Activated B cell treated with CpG ODN at 0.5 μM for 24 hours (primary cell): ENCODE measurements at regions of chr12 and their contacts with region 1.

Region 1: GRCh38 chr12:132761032-132761920 is at the start of gene ANKLE2:
- DNase-seq: peak; percentile 53
- ATAC-seq: peak; percentile 56
- H3K4me3 Mint-ChIP-seq: peak within 1 kb of the TSS; percentile 98
- H3K27ac Mint-ChIP-seq: peak within 1 kb of the TSS; percentile 96
- H3K4me1 Mint-ChIP-seq: peaks cover 60% of the 10 kb centered on the region
- H3K27me3 Mint-ChIP-seq: no peaks in the 10 kb centered on the region
- CTCF ChIP-seq: no peak
- total RNA-seq, gene ANKLE2: 117 and 136 TPM in 2 replicates

Region 2: DNA sequence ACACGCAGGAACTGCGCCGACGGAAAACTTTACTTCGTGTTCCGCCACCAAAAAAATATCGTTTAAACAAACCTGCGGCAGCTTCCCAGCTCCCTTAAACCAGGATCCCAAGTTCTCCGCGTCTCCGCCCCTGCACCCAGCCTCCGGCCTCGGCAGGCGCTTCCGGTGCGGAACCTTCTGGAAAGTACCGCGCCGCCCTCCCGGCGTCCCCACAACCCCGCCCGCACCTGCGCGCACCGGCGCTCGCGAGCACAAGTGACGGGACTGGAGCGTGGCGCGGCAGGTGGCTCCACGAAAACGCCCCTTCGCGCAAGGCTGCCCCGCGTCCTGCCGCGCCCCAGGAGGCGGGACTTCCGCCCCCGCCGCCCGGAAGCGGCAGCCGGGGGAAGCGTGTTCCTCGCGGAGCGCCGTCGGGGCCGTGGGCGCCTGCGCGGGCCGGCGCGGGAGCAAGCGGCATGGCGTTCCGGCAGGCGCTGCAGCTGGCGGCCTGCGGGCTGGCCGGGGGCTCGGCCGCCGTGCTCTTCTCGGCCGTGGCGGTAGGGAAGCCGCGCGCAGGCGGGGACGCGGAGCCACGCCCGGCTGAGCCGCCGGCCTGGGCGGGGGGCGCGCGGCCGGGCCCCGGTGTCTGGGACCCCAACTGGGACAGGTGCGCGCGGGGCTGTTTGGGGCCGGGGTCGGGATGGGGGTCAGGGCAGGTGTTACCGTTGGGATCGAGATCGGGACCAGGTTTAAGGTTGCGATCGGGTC is 50.7 kb before region 1 on chr12 and contains the start of gene PGAM5:
- CTCF ChIA-PET with region 1: no interaction called
- POLR2A ChIA-PET with region 1: interaction called, 5 read pairs
- intact Hi-C with region 1: loop called (anchors 1 kb)
- DNase-seq: peak; percentile 96
- ATAC-seq: peak; percentile 93
- H3K4me3 Mint-ChIP-seq: peak within 1 kb of the TSS; percentile 92
- H3K27ac Mint-ChIP-seq: peak within 1 kb of the TSS; percentile 95
- H3K4me1 Mint-ChIP-seq: peaks cover 33% of the 10 kb centered on the region
- H3K27me3 Mint-ChIP-seq: no peaks in the 10 kb centered on the region
- CTCF ChIP-seq: no peak
- total RNA-seq, gene PGAM5: 44.0 and 48.7 TPM in 2 replicates

Region 3: DNA sequence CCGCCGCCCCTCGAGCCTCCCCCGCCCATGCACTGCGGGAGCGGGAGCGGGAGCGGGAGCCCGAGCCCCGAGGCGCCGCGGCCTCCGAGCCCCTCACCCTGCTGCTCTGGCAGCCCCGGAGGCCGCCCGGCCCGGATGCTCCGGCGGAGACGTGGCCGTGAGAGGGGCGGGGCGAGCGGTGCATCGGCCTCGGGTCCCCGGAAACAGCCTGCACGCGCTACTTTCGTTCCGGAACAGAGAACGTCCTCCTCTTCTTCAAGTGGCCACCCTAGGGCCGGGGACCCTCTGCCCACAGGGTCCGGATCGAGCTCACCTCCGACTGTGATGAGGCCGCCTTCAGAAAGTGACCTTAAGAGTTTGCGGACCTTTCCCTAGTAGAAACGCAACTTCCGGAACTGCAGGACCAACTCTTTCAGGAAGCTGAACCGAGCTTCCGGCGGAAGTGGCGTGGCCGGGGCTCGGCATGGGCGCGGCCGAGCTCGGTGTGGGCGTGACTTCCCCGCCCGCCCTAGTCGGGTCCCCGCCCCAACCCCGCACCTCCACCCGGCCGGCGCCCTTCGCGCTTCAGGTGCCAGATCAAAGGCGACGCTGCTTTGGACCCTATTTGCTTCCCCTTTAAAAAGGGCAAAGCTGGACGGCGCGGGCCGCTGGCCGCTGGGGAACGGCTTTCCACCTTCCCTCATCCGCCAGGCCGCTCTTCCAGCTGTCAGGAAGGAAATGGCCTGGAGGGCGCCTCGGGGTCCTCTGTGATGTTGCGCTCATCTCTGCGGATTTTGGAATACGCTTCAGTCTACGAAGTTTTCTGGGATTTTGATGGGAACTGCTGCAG is 67.6 kb after region 1 on chr12 and contains the start of gene GOLGA3:
- CTCF ChIA-PET with region 1: no interaction called
- POLR2A ChIA-PET with region 1: interaction called, 13 read pairs
- intact Hi-C with region 1: loop called (anchors 5 kb)
- DNase-seq: peak; percentile 95
- ATAC-seq: peak; percentile 92
- H3K4me3 Mint-ChIP-seq: peak within 1 kb of the TSS; percentile 96
- H3K27ac Mint-ChIP-seq: peak within 1 kb of the TSS; percentile 100
- H3K4me1 Mint-ChIP-seq: peaks cover 50% of the 10 kb centered on the region
- H3K27me3 Mint-ChIP-seq: no peaks in the 10 kb centered on the region
- CTCF ChIP-seq: no peak
- total RNA-seq, gene GOLGA3: 51.3 and 52.4 TPM in 2 replicates

Region 4: GRCh38 chr12:132908145-132909044 is 147.1 kb after region 1 on chr12:
- CTCF ChIA-PET with region 1: no interaction called
- POLR2A ChIA-PET with region 1: interaction called, 5 read pairs
- intact Hi-C with region 1: loop called (anchors 2 kb)
- DNase-seq: peak; percentile 91
- ATAC-seq: peak; percentile 90
- H3K4me3 Mint-ChIP-seq: peak overlapping the region; percentile 94
- H3K27ac Mint-ChIP-seq: peak overlapping the region; percentile 96
- H3K4me1 Mint-ChIP-seq: peaks cover 13% of the 10 kb centered on the region
- H3K27me3 Mint-ChIP-seq: peaks cover 2% of the 10 kb centered on the region
- CTCF ChIP-seq: no peak

Region 5: GRCh38 chr12:133130038-133130807 is 368.9 kb after region 1 on chr12 and contains the starts of genes ZNF10 and ZNF891:
- CTCF ChIA-PET with region 1: no interaction called
- POLR2A ChIA-PET with region 1: interaction called, 3 read pairs
- intact Hi-C with region 1: loop called (anchors 5 kb)
- DNase-seq: peak; percentile 99
- ATAC-seq: peak; percentile 86
- H3K4me3 Mint-ChIP-seq: peak within 1 kb of the TSS; percentile 95
- H3K27ac Mint-ChIP-seq: peak within 1 kb of the TSS; percentile 98
- H3K4me1 Mint-ChIP-seq: peaks cover 21% of the 10 kb centered on the region
- H3K27me3 Mint-ChIP-seq: no peaks in the 10 kb centered on the region
- CTCF ChIP-seq: no peak
- total RNA-seq, gene ZNF10: 8.4 and 10.9 TPM in 2 replicates
- total RNA-seq, gene ZNF891: 2.9 and 4.0 TPM in 2 replicates